Naive thymus-derived CD4-positive, alpha-beta T cell (primary cell): ENCODE measurements at regions of chr2 and their contacts with region 1.

Region 1: DNA sequence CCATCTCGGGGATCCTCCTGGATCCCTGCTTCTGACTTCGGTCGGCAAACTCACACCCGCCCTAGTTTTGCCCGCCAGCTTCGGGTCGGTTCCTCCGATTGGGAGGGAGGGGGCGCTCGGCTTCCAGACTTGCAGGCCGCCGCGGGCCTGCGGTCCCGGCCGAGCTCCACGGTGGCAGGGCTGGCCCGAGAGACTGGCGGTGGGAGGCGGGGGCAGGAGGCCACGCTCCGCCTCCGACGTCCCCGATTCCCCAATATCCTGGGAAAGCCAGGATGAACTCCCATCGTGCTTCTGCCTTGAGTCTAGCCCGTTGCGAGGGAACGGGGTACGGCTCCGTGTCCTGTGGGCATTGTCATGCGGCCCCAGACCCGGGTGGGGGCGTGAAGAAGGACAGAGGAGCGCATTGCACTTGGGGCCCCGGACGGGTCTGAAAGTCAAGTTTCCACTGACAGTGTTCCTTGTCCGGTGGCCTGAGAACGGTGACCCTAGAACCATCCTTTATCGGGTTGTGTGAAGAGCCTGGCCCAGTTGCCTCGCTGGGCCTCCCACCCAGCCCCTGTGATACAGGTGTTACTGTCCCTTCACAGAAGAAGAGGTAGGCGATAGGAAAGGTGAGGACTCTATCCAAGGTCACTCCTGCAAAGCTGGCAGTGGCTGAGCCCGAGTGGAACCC is 2.4 kb upstream of the INHBB start:
- DNase-seq: peak in 8 of 9 donors; percentile 37 to 66 (median 48)
- ATAC-seq: peak; percentile 64
- H3K4me3 ChIP-seq: peak overlapping the region; percentile 13
- H3K4me3 Mint-ChIP-seq: peak overlapping the region; percentile 45 to 79 (median 69)
- H3K27ac ChIP-seq: no peak overlapping the region
- H3K27ac Mint-ChIP-seq: no peak overlapping the region
- H3K4me1 ChIP-seq: peaks cover 9 to 15% of the 10 kb centered on the region in 2 donors
- H3K4me1 Mint-ChIP-seq: peaks cover 9 to 26% (median 22%) of the 10 kb centered on the region in 7 donors
- H3K27me3 ChIP-seq: peaks cover 5 to 40% of the 10 kb centered on the region in 2 donors
- H3K27me3 Mint-ChIP-seq: peaks cover 41 to 72% (median 51%) of the 10 kb centered on the region in 5 donors

Region 2: DNA sequence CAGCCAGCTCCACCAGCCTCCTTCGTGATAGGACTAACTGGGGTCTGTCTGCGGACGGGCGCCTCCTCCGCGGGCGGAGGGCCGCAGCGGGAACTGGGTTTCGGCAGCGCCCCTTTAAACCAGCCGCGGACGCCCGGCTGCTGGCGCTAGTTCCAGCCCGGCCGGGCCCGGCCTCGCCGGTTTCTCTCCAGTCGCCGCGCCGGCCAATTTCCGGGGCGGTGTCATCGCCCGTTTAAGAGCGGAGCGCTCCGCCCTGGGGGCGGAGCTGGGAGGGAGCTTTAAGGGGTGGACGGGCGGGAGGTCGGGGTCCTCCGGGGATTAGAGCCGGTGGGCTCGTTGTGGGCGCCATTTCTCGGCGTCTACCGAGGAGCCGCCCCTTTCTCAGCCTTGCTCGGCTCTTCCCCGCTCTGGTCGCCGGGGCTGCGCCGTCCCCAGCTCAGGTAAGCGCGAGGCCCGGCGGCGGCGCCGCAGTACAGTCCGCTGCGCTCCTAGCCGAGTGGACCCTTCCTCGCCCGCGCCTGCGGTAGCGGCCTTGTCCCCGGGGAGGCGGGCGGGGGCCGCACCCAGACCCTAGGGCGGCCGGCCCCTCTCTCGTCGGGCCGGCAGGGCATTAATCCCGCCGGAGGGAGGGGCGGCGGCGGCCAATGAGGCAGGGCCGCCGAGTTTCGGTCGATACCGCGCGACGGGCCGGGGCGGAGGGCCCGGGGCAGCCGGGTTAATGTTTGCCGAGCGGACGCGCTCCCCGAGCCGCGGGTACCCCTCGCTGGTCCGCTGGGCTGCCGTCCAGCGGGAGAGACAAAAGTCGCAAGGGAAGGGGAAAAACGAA is 330.6 kb before region 1 on chr2 and contains the start of gene EPB41L5:
- CTCF ChIA-PET with region 1: no interaction called
- POLR2A ChIA-PET with region 1: no interaction called
- intact Hi-C with region 1: loop called in 1 of 2 experiments (anchors 10 kb)
- DNase-seq: peak; percentile 56 to 81 (median 67)
- ATAC-seq: peak; percentile 93
- H3K4me3 ChIP-seq: peak within 1 kb of the TSS; percentile 69
- H3K4me3 Mint-ChIP-seq: peak within 1 kb of the TSS; percentile 73 to 89 (median 86)
- H3K27ac ChIP-seq: peak within 1 kb of the TSS; percentile 70
- H3K27ac Mint-ChIP-seq: peak within 1 kb of the TSS in 8 of 9 donors; percentile 36 to 75 (median 70)
- H3K4me1 ChIP-seq: peaks cover 6% of the 10 kb centered on the region in 2 donors
- H3K4me1 Mint-ChIP-seq: peaks cover 8 to 37% (median 24%) of the 10 kb centered on the region in 7 donors
- H3K27me3 ChIP-seq: no peaks in the 10 kb centered on the region
- H3K27me3 Mint-ChIP-seq: peaks cover 0 to 20% (median 0%) of the 10 kb centered on the region in 5 donors
- total RNA-seq, gene EPB41L5: 2.2 to 9.3 (median 6.8) TPM

Region 3: GRCh38 chr2:120384486-120385354 is 41.2 kb after region 1 on chr2:
- CTCF ChIA-PET with region 1: no interaction called
- POLR2A ChIA-PET with region 1: no interaction called
- intact Hi-C with region 1: no loop called
- DNase-seq: no peak
- ATAC-seq: no peak
- H3K4me3 ChIP-seq: no peak overlapping the region
- H3K4me3 Mint-ChIP-seq: no peak overlapping the region
- H3K27ac ChIP-seq: no peak overlapping the region
- H3K27ac Mint-ChIP-seq: no peak overlapping the region
- H3K4me1 ChIP-seq: no peaks in the 10 kb centered on the region
- H3K4me1 Mint-ChIP-seq: peaks cover 0 to 4% (median 0%) of the 10 kb centered on the region in 7 donors
- H3K27me3 ChIP-seq: no peaks in the 10 kb centered on the region
- H3K27me3 Mint-ChIP-seq: peaks cover 0 to 9% (median 5%) of the 10 kb centered on the region in 5 donors

Region 4: DNA sequence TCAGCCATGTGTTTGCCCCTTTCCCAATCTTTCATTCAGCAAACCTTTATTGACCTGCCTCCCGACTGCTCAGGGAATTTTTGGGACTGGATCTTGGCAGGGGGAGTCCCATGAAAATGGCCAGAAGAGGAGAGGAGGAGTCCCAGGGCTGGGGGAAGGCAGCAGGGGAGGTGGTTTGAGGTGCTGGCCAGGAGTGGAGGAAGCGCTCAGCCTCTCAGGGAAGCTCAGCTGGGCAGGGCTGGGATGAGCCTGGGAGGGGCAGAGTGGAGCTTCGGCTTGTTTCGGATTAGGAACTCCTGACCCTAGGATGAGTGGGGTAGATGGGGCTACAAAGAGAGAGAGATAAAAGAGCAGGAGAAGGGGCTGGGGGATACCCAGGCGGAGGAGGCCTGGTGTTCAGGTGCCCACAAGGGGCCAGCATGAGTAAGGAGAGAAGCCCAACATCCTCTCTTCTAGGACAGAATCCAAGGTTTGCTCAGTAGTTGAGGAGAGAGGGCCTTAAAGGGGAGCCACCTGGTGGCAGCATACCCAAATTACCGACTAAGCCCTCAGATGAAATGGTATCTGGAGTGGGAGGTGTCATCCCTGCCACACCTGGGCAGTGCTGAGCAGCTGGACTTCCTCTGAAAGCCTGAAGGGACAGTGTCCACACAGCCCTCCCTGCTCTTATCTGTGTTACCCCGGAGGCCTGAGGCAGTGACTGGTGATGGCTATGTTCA is 93.5 kb after region 1 on chr2:
- CTCF ChIA-PET with region 1: no interaction called
- POLR2A ChIA-PET with region 1: no interaction called
- intact Hi-C with region 1: loop called (anchors 1 to 2 kb)
- DNase-seq: peak in 2 of 9 donors; percentile 7 to 10
- ATAC-seq: no peak
- H3K4me3 ChIP-seq: no peak overlapping the region
- H3K4me3 Mint-ChIP-seq: no peak overlapping the region
- H3K27ac ChIP-seq: no peak overlapping the region
- H3K27ac Mint-ChIP-seq: no peak overlapping the region
- H3K4me1 ChIP-seq: no peaks in the 10 kb centered on the region
- H3K4me1 Mint-ChIP-seq: peaks cover 0 to 5% (median 2%) of the 10 kb centered on the region in 7 donors
- H3K27me3 ChIP-seq: no peaks in the 10 kb centered on the region
- H3K27me3 Mint-ChIP-seq: peaks cover 18 to 35% (median 25%) of the 10 kb centered on the region in 5 donors

Region 5: DNA sequence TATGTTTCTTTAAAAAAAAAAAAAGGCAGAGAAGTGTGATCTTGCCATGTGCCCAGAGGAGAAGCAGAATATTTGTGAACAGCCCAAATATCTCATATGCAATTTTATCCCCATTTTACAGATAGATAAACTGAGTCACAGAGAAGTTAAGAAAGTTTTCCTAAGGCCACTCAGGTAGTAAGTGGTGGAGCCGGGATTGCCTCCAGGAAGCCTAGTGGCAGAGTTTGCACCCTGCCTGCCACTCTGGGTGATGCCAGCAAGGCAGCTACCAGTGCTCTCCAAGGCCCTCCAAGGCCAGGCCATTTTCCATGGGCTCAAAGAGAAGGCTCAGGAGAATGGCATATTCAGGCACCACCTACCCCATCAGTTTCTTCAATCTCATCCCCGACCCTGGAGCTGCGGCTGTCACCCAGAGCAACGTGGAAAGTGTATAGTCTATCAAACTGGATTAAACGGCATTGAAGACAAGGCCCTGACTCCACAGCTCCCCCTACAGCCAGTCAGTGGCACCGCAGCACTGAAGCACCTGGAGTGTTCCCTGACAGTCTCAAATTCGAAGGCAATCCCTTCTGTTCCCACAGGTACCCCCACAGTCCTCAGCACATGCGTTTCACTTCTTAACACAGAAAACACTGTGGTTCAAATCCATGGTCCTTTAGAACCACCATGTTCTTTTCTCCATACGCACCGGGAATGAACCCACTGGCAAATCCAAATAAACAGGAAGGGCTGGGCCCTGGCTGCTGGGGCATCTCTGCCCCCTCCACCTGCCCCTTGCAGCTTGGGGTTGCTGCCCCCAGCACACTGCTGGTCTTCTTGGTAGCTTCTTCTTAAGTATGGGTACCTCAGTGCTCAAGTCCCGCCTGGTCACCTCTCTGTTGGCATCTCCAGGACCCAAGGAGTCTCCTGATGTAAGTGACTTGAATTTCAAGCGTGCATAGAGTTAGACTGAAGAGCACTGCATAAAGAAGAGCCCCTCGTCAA is 177.7 kb after region 1 on chr2:
- CTCF ChIA-PET with region 1: no interaction called
- POLR2A ChIA-PET with region 1: no interaction called
- intact Hi-C with region 1: loop called in 1 of 2 experiments (anchors 10 kb)
- DNase-seq: peak in 1 of 9 donors; percentile 31
- ATAC-seq: no peak
- H3K4me3 ChIP-seq: no peak overlapping the region
- H3K4me3 Mint-ChIP-seq: no peak overlapping the region
- H3K27ac ChIP-seq: no peak overlapping the region
- H3K27ac Mint-ChIP-seq: no peak overlapping the region
- H3K4me1 ChIP-seq: no peaks in the 10 kb centered on the region
- H3K4me1 Mint-ChIP-seq: no peaks in the 10 kb centered on the region
- H3K27me3 ChIP-seq: peaks cover 0 to 3% of the 10 kb centered on the region in 2 donors
- H3K27me3 Mint-ChIP-seq: peaks cover 10 to 50% (median 17%) of the 10 kb centered on the region in 5 donors

Region 6: GRCh38 chr2:120552800-120553481 is 209.4 kb after region 1 on chr2:
- CTCF ChIA-PET with region 1: no interaction called
- POLR2A ChIA-PET with region 1: no interaction called
- intact Hi-C with region 1: loop called in 1 of 2 experiments (anchors 1 kb)
- DNase-seq: peak in 2 of 9 donors; percentile 4 to 33
- ATAC-seq: peak; percentile 54
- H3K4me3 ChIP-seq: no peak overlapping the region
- H3K4me3 Mint-ChIP-seq: no peak overlapping the region
- H3K27ac ChIP-seq: no peak overlapping the region
- H3K27ac Mint-ChIP-seq: no peak overlapping the region
- H3K4me1 ChIP-seq: no peaks in the 10 kb centered on the region
- H3K4me1 Mint-ChIP-seq: peaks cover 0 to 8% (median 4%) of the 10 kb centered on the region in 7 donors
- H3K27me3 ChIP-seq: no peaks in the 10 kb centered on the region
- H3K27me3 Mint-ChIP-seq: peaks cover 20 to 45% (median 43%) of the 10 kb centered on the region in 5 donors